ENCODE measurements at regions of chr19 and their contacts with region 1.

Region 1: DNA sequence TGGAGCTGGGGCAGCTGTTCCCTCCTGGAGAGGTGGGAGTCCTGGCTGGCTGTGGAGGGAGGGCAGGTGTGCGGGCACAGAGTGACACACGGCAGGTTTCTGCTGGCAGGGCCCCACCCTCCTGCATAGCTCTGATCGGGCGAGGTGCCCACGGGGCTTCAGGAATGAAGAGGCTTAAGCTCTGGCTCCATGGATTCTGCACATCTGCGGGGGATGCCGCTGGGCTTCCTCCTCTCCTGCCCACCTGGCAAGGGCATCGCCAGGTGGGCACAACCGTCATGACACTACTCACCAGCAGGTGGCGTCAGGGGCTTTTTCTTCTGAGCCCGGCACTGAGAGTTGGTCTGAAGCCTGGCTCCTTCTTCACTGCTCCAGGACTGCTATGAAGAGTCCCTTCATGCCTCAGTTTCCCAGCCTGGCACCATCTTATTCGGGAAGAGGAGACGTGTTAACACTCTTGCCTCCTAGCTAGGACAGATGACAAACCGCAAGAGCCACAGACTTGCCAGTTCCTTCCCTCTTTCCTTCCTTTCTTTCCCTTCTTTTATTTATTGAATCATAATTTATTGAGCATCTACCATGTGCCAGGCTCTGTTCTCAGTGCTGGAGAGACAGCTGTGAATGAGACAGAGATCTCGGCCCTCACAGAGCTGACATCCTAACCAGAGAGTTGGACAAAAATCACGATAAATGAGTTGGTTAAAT is 15.2 kb upstream of the PAK4 start:
- DNase-seq: peak; percentile 74
- H3K4me3 Mint-ChIP-seq: no peak overlapping the region
- H3K27ac Mint-ChIP-seq: no peak overlapping the region
- H3K4me1 Mint-ChIP-seq: peaks cover 30% of the 10 kb centered on the region
- H3K27me3 Mint-ChIP-seq: no peaks in the 10 kb centered on the region
- CTCF ChIP-seq: peak; percentile 81

Region 2: GRCh38 chr19:39052243-39052746 is 58.1 kb before region 1 on chr19:
- CTCF ChIA-PET with region 1: interaction called, 3 read pairs
- POLR2A ChIA-PET with region 1: no interaction called
- intact Hi-C with region 1: loop called (anchors 1 kb)
- DNase-seq: peak; percentile 62
- H3K4me3 Mint-ChIP-seq: no peak overlapping the region
- H3K27ac Mint-ChIP-seq: no peak overlapping the region
- H3K4me1 Mint-ChIP-seq: no peaks in the 10 kb centered on the region
- H3K27me3 Mint-ChIP-seq: no peaks in the 10 kb centered on the region
- CTCF ChIP-seq: peak; percentile 90

Region 3: DNA sequence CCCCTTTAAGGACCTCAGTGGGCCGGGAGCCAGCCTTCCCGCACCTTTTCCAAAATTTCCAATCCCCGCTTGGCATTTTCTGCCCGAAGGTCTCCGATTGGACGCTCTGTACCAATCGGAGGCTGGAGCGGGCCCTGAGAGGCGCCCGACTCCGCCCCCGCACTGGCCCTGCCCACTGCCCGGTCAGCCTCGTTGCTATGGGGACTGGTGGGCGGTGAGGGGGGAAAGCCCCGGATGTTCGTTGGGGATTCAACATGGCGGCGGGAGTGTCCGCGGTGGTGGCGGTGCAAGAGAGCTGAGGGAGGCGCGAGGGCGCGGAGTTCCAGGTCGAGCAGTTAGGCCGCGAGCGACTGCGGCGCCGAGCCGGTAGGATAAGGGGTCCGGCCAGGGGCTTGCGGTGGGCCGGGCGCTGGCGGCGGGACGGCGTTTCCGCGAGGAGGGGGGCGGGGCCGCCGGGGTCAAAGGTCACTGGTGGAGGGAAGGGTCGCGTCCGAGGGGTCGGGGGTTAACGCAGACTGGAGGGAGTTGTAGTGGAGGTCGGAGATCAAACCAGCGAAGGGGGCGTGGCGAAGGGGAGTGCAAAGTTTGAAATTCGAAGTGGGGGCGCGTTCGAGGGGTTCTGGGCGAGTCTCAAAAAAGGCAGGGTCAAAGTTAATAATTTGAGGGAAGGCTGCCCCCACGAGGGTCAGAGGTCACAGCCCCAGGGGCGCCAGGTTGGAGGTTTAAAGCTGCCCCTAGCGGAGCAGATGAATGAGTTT is 15.3 kb after region 1 on chr19 and contains the start of gene PAK4:
- CTCF ChIA-PET with region 1: interaction called, 16 read pairs
- POLR2A ChIA-PET with region 1: interaction called, 3 read pairs
- intact Hi-C with region 1: no loop called
- DNase-seq: peak; percentile 99
- H3K4me3 Mint-ChIP-seq: peak within 1 kb of the TSS; percentile 87
- H3K27ac Mint-ChIP-seq: peak within 1 kb of the TSS; percentile 89
- H3K4me1 Mint-ChIP-seq: peaks cover 24% of the 10 kb centered on the region
- H3K27me3 Mint-ChIP-seq: no peaks in the 10 kb centered on the region
- CTCF ChIP-seq: no peak
- total RNA-seq, gene PAK4: 28.4 and 29.5 TPM in 2 replicates

Region 4: GRCh38 chr19:39160334-39160791 is 49.9 kb after region 1 on chr19:
- CTCF ChIA-PET with region 1: no interaction called
- POLR2A ChIA-PET with region 1: no interaction called
- intact Hi-C with region 1: no loop called
- DNase-seq: no peak
- H3K4me3 Mint-ChIP-seq: peak overlapping the region; percentile 30
- H3K27ac Mint-ChIP-seq: peak overlapping the region; percentile 88
- H3K4me1 Mint-ChIP-seq: peaks cover 34% of the 10 kb centered on the region
- H3K27me3 Mint-ChIP-seq: no peaks in the 10 kb centered on the region
- CTCF ChIP-seq: no peak

Region 5: DNA sequence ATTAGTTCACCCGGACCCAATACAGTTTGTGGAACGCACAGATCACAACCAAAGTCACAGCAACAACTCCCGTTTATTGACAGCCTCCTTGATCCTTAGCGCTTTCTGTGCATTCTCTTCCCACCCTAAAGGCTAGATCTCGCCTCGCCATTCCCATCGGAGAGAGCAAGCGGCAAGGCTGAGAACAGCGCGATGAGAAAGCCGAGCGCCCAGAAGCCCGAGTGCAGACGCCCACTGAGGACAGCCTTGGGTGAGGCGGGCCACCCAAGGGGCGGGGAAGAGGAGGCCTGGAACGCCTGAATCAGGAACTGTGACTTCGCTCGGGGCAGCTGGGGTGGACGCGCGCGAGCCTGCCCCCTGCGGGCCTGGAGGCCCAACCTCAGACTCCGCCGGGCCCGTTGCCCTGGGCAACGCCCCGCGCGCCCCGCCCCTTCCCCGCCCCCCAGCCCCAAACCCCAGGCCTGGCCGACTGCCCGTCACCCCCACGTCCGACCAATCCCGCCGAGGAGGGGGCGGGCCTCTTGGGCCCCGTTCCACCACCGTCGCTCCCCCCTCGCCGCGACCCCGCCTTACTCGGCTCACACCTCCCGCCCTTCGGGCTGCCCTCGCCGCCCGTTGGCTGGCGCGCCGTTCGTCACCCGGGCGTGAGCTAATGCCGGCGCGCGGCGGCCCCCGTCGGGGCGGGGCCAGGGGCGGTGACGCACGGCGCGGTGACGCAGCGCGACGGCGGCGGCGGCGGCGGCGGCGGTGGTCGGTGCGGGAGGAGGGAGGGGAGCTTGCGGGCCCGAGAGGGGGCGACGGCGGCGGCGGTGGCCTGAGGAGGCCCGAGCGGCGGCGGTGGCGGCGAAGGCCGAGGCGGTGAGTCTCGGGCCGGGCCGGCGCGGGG is 231.5 kb after region 1 on chr19 and contains the start of gene SAMD4B:
- CTCF ChIA-PET with region 1: no interaction called
- POLR2A ChIA-PET with region 1: interaction called, 11 read pairs
- intact Hi-C with region 1: no loop called
- DNase-seq: peak; percentile 98
- H3K4me3 Mint-ChIP-seq: peak within 1 kb of the TSS; percentile 100
- H3K27ac Mint-ChIP-seq: peak within 1 kb of the TSS; percentile 97
- H3K4me1 Mint-ChIP-seq: peaks cover 48% of the 10 kb centered on the region
- H3K27me3 Mint-ChIP-seq: no peaks in the 10 kb centered on the region
- CTCF ChIP-seq: peak; percentile 79
- total RNA-seq, gene SAMD4B: 65.4 and 94.2 TPM in 2 replicates

Region 6: DNA sequence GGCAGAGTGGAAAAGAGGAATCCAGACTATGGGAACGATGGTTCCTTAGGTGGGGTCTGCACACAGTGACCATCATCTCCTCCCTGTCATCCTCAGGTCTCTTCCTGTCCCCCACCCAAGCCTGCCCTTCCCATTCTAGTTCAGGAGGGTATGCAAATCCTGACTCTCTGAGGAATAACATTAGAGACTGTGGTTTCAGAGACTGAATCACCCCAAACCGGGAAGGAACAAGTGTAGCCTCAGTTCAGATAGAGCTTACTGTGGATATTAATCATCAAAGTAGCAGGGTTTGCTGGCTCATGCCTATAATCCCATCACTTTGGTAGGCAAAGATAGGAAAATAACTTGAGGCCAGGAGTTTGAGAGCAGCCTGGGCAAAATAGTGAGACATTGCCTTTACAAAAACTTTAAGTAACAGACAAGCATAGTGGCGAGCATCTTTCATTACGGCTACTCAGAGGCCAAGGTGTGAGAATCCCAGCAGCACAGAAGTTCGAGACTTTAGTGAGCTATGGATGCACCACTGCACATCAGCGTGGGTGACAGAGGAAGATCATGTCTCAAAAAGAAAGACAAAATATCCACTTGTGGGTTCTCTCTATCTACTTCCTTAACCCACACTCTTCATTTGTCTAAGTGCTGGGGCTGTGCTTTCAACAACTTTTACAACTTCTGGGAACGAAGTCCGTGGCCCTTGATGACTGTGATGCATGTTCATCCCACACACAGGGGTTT is 472.6 kb after region 1 on chr19:
- CTCF ChIA-PET with region 1: no interaction called
- POLR2A ChIA-PET with region 1: no interaction called
- intact Hi-C with region 1: no loop called
- DNase-seq: no peak
- H3K4me3 Mint-ChIP-seq: no peak overlapping the region
- H3K27ac Mint-ChIP-seq: no peak overlapping the region
- H3K4me1 Mint-ChIP-seq: no peaks in the 10 kb centered on the region
- H3K27me3 Mint-ChIP-seq: peaks cover 30% of the 10 kb centered on the region
- CTCF ChIP-seq: no peak

Measured in MCF 10A (cell line).